Panc1 (cell line): ENCODE measurements at regions of chr18 and their contacts with region 1.

Region 1: GRCh38 chr18:34122724-34123334 is 101.9 kb downstream of the NOL4 start:
- DNase-seq: peak; percentile 45
- ATAC-seq: peak; percentile 69; the same call in 1 of the 2 replicates
- H3K4me3 ChIP-seq: no peak overlapping the region
- H3K27ac ChIP-seq: no peak overlapping the region
- H3K4me1 ChIP-seq: no peaks in the 10 kb centered on the region
- H3K27me3 ChIP-seq: no peaks in the 10 kb centered on the region
- CTCF ChIP-seq: peak; percentile 83; the same call in 1 of the 2 replicates

Region 2: DNA sequence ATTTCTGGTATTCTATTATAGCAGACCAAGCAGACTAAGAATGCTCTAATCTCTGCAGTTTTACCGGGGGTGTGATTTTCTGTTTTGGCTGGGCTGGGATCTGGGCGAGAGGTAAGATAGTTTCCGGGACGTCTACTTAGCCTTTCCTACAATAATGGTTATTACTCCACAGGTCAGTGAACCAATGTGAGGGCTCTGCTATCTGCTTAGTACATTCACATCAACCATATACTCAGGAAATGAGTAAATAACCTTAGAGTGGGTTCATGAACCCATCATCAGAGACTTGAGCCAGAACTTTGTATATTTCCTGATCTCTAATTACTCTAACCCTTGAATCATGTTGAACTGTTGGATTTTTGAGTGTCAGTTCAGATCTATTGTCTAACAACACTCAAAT is 192.0 kb after region 1 on chr18:
- CTCF ChIA-PET with region 1: interaction called, 12 read pairs
- POLR2A ChIA-PET with region 1: no interaction called
- in situ Hi-C with region 1: no loop called
- intact Hi-C with region 1: no loop called
- DNase-seq: no peak
- ATAC-seq: no peak
- H3K4me3 ChIP-seq: no peak overlapping the region
- H3K27ac ChIP-seq: no peak overlapping the region
- H3K4me1 ChIP-seq: no peaks in the 10 kb centered on the region
- H3K27me3 ChIP-seq: no peaks in the 10 kb centered on the region
- CTCF ChIP-seq: no peak

Region 3: DNA sequence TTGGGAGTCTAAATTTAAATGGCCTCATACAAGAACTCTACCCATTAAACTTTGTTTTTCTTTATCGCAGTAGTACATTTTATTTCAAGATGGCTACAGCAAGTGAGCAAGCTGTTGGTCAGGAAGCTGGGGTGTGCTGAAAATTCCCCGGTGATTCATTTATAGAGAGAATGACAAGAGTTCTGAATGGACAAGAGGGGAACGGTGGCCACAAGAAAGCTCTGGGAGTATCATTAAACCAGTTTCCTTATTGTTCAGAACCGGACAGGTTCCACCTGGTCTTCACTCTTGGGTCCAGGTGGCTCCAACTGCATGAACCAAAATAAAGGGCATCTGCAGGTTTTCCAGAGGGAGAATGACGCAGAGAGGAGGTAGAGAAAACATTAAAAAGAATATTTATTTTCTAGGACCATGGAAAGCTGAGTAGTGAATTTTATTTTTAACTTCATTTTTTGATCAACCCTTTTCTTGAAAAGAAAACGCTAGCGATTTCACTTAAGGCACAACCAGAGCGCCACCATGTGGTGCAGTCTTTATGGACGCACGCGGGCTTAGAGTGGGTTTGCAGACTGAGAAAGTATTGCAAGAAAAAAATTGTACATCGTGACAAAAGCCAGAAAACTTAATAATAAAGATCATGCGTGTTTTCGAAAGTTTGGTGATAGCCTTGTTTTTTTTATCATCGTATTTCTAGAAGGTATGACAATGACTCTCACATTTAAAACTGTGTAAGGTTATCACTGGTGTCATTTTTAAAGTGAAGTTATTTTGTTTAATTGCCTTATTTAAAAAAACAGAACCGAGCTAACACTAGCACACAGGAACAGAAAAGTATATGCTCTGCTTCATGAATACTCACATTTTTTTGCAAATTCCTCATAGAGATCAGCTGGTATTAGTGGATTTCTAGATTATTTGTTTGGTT is 199.8 kb after region 1 on chr18:
- CTCF ChIA-PET with region 1: interaction called, 6 read pairs
- POLR2A ChIA-PET with region 1: no interaction called
- in situ Hi-C with region 1: no loop called
- intact Hi-C with region 1: loop called (anchors 1 kb)
- DNase-seq: peak; percentile 17
- ATAC-seq: no peak
- H3K4me3 ChIP-seq: no peak overlapping the region
- H3K27ac ChIP-seq: no peak overlapping the region
- H3K4me1 ChIP-seq: no peaks in the 10 kb centered on the region
- H3K27me3 ChIP-seq: no peaks in the 10 kb centered on the region
- CTCF ChIP-seq: peak; percentile 86

Region 4: DNA sequence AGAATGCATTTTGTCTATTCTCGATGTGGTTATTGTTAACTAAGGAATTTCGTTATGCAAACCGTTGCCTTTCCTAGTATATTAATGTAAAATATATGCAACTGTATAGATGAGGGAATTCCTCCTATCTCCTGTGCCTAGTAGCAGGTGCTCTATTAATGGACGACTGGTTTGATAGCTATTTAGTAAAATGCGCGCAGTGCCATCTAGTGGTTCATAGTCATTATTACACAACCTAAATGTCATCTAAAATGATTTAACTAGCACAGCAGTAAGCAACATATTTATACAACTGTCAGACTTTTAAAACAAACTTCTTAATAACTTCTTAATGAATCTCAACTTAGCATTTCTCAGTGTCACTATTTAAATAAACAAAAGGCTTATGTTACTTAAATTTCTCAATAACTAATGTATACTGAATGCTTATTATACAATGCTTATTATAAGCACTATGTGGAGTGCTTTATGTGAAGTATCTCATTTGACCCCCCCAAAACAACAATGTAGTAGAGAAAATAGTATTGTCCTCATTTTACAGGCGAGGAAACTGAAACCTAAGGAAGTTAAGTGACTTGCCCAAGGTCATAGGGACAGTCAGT is 665.2 kb after region 1 on chr18:
- CTCF ChIA-PET with region 1: no interaction called
- POLR2A ChIA-PET with region 1: no interaction called
- in situ Hi-C with region 1: no loop called
- intact Hi-C with region 1: loop called (anchors 5 kb)
- DNase-seq: no peak
- ATAC-seq: peak; percentile 82
- H3K4me3 ChIP-seq: no peak overlapping the region
- H3K27ac ChIP-seq: no peak overlapping the region
- H3K4me1 ChIP-seq: no peaks in the 10 kb centered on the region
- H3K27me3 ChIP-seq: no peaks in the 10 kb centered on the region
- CTCF ChIP-seq: peak; percentile 63; the same call in 1 of the 2 replicates